ENCODE measurements at regions of chr2 and their contacts with region 1.

Region 1: DNA sequence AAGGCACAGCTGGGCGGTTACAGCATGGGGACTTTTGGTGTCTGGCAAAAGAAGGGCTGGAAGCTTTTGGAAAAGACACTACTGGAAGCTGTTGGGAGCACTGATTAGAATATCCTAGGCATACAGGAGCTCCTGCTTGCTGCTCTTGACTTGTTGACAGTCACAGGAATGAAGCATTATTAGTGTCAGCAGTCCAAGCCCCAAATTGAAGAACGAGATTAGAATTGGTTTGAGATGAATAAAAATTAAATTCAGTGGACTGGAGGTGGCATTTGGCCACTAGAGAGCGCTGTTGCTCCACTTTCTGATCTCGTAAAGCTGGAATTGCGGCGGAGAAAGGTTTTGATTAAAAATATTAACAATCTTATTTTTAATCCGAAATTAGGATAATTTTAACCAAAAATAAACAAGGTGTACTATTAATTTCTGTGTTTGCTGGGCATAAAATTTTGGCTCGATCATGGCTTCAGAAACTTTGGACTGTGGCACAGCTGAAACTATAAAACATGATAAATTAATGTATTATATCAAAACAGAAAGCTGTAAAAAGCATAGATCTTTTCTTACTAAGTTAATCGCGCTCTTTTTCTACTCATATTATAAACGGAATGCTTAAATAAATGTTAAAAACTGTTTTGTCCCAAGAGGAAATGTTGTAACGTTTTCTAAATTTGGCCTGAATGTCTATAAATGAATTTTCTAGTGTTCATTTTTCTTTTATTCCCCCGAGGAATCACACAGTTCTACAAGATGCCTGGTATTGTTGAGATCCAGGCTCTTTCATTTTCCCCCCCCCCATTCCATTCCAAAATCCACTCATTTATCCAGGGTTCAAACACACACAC is 2.4 kb upstream of the HOXD8 start:
- DNase-seq: peak; percentile 68
- ATAC-seq: no peak
- H3K4me3 Mint-ChIP-seq: no peak overlapping the region
- H3K27ac Mint-ChIP-seq: no peak overlapping the region
- H3K4me1 Mint-ChIP-seq: peaks cover 7% of the 10 kb centered on the region
- H3K27me3 Mint-ChIP-seq: peaks cover 84% of the 10 kb centered on the region

Region 2: DNA sequence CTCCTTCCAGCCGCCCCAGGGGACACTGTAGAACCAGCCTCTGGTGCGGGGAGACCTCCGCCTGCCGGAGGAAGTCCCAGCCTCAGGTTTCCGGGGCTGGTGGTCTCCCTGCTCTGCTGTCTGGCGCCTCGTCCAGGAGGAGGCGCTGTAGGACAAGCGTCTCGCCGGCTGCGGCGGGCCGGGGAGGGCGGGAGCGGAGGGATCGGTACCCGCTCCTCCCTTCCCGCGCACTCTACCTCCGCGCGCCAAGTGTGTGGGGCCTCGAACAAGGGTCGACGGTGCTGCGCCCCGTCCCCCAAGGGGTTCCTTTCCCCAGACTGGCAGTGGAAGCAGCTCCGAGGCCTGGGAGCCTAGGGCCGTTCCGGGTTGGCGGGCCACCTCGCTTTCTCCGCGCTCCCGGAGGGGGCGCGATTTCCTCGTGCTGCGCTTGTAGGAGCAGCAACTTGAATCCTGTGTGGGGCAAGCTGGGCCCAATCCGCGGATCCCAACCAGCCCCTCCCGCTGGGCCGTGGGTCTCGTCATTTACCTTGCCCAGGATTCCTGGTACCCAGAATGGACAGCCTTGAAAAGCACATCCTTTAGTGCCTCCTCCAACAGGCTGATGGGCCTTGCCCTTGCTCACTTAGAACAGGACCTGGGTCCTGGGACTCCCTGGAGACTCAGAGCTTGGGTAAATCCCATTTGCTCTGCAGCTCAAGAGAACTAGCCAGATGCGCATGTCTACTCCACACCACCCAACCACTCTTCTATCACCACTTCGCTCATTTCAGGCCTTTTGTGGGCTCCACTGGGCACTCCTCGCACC is 13.6 kb after region 1 on chr2:
- CTCF ChIA-PET with region 1: interaction called, 14 read pairs
- DNase-seq: peak; percentile 80
- ATAC-seq: peak; percentile 94
- H3K4me3 Mint-ChIP-seq: peak overlapping the region; percentile 26
- H3K27ac Mint-ChIP-seq: no peak overlapping the region
- H3K4me1 Mint-ChIP-seq: peaks cover 13% of the 10 kb centered on the region
- H3K27me3 Mint-ChIP-seq: peaks cover 86% of the 10 kb centered on the region

Region 3: GRCh38 chr2:176151442-176152369 is 24.6 kb after region 1 on chr2 and contains the start of gene HOXD4:
- CTCF ChIA-PET with region 1: interaction called, 14 read pairs
- DNase-seq: no peak
- ATAC-seq: no peak
- H3K4me3 Mint-ChIP-seq: no peak within 1 kb of the TSS
- H3K27ac Mint-ChIP-seq: no peak within 1 kb of the TSS
- H3K4me1 Mint-ChIP-seq: no peaks in the 10 kb centered on the region
- H3K27me3 Mint-ChIP-seq: peaks cover 95% of the 10 kb centered on the region
- total RNA-seq, gene HOXD4: not detected

Region 4: GRCh38 chr2:176454893-176455811 is 328.0 kb after region 1 on chr2:
- CTCF ChIA-PET with region 1: interaction called, 24 read pairs
- DNase-seq: peak; percentile 83
- ATAC-seq: peak; percentile 72
- H3K4me3 Mint-ChIP-seq: no peak overlapping the region
- H3K27ac Mint-ChIP-seq: no peak overlapping the region
- H3K4me1 Mint-ChIP-seq: peaks cover 1% of the 10 kb centered on the region
- H3K27me3 Mint-ChIP-seq: peaks cover 40% of the 10 kb centered on the region

Region 5: GRCh38 chr2:176638167-176639015 is 511.2 kb after region 1 on chr2:
- CTCF ChIA-PET with region 1: interaction called, 12 read pairs
- DNase-seq: peak; percentile 70
- ATAC-seq: peak; percentile 92
- H3K4me3 Mint-ChIP-seq: peak overlapping the region; percentile 60
- H3K27ac Mint-ChIP-seq: no peak overlapping the region
- H3K4me1 Mint-ChIP-seq: peaks cover 11% of the 10 kb centered on the region
- H3K27me3 Mint-ChIP-seq: peaks cover 70% of the 10 kb centered on the region

Region 6: GRCh38 chr2:176653479-176654443 is 526.6 kb after region 1 on chr2:
- CTCF ChIA-PET with region 1: interaction called, 32 read pairs
- DNase-seq: peak; percentile 63
- ATAC-seq: peak; percentile 48
- H3K4me3 Mint-ChIP-seq: no peak overlapping the region
- H3K27ac Mint-ChIP-seq: no peak overlapping the region
- H3K4me1 Mint-ChIP-seq: peaks cover 26% of the 10 kb centered on the region
- H3K27me3 Mint-ChIP-seq: peaks cover 74% of the 10 kb centered on the region

Region 7: DNA sequence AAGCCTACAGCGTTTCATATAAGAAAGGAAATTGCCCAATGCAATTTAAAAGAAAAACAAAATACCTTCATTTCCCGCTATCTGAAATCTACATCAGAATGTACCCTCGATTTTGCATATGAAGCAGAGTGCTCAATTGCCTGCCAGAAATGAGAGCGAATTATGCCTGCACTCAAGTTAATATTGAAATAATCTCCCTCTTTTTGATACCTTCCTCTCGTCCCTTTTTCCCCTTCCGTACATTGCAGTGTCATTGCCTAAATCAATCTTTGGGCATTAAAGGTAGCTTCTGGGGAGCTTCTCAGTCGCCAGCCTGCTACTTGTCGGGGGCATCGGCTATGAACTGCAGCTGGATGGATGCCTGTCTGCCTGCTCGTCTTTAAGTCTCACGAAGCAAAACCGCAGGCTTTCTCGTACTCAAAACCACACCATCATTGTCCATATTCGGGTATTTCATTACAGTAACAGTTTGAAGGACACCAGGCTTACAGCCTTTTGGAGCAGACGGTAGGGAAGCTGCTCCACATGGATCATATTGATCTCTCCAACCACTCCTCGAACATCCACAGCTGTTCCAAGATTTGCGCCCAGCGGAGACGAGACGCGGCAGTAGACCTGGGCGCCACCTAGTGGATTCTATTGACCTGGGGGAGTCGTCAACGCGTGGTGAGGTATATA is 1021.5 kb after region 1 on chr2:
- CTCF ChIA-PET with region 1: interaction called, 28 read pairs
- DNase-seq: peak; percentile 86
- ATAC-seq: peak; percentile 97
- H3K4me3 Mint-ChIP-seq: peak overlapping the region; percentile 88
- H3K27ac Mint-ChIP-seq: peak overlapping the region; percentile 67
- H3K4me1 Mint-ChIP-seq: peaks cover 25% of the 10 kb centered on the region
- H3K27me3 Mint-ChIP-seq: peaks cover 61% of the 10 kb centered on the region